PC-9 (cell line): ENCODE measurements at regions of chr16 and their contacts with region 1.

Region 1: GRCh38 chr16:12095275-12096156 is 119.0 kb downstream of the SNX29 start:
- DNase-seq: peak in 1 of 2 experiments; percentile 47
- H3K4me3 ChIP-seq: no peak overlapping the region
- H3K27ac ChIP-seq: no peak overlapping the region
- H3K4me1 ChIP-seq: peaks cover 13% of the 10 kb centered on the region; the same call in 1 of the 2 replicates
- H3K27me3 ChIP-seq: no peaks in the 10 kb centered on the region
- CTCF ChIP-seq: peak; percentile 95

Region 2: DNA sequence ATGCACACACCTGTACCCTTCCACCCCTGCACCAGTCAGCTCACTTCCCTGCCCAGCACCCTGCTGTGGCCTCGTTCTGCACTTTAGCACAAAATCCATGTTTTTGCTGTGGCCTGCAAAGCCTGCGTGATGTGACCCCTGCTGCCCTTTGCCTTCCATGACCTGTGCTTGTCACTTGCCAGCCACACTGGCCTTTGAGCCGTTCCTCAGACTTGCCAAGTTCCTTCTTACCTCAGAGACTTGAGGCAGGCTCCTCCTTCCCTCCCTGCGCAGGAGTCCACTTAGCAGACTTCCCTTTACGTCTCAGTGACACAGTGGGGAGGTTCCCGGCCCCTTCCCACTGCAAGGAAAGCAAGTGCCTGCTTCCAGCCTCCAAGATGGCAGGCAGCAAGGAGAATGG is 15.7 kb after region 1 on chr16:
- CTCF ChIA-PET with region 1: interaction called, 3 read pairs
- POLR2A ChIA-PET with region 1: interaction called, 10 read pairs
- intact Hi-C with region 1: no loop called
- DNase-seq: no peak
- H3K4me3 ChIP-seq: no peak overlapping the region
- H3K27ac ChIP-seq: no peak overlapping the region
- H3K4me1 ChIP-seq: no peaks in the 10 kb centered on the region
- H3K27me3 ChIP-seq: no peaks in the 10 kb centered on the region
- CTCF ChIP-seq: no peak

Region 3: GRCh38 chr16:12228602-12229499 is 133.3 kb after region 1 on chr16:
- CTCF ChIA-PET with region 1: no interaction called
- POLR2A ChIA-PET with region 1: interaction called, 3 read pairs
- intact Hi-C with region 1: loop called (anchors 1 kb)
- DNase-seq: peak in 1 of 2 experiments; percentile 65
- H3K4me3 ChIP-seq: no peak overlapping the region
- H3K27ac ChIP-seq: no peak overlapping the region
- H3K4me1 ChIP-seq: peaks cover 8% of the 10 kb centered on the region; the same call in 1 of the 2 replicates
- H3K27me3 ChIP-seq: no peaks in the 10 kb centered on the region
- CTCF ChIP-seq: peak; percentile 62

Region 4: DNA sequence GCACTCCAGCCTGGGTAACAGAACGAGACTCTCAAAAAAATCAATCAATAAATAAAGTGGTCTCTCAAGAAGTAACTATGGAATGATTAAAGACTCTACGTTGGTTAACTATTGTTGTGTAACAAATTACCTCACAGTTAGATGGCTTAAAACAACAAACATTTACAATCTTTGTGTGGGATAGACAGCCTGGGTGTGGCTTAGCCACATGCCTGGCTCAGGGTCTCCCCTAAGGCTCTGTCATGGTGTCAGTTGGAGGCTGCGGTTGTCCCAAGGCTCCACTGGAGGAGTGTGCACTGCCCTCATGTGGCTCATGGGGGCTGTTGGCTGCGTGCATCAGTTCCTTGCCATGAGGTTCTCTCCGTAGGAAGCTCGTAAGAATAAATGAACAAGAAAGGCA is 175.5 kb after region 1 on chr16:
- CTCF ChIA-PET with region 1: no interaction called
- POLR2A ChIA-PET with region 1: no interaction called
- intact Hi-C with region 1: loop called (anchors 10 kb)
- DNase-seq: peak in 1 of 2 experiments; percentile 4
- H3K4me3 ChIP-seq: no peak overlapping the region
- H3K27ac ChIP-seq: no peak overlapping the region
- H3K4me1 ChIP-seq: no peaks in the 10 kb centered on the region
- H3K27me3 ChIP-seq: no peaks in the 10 kb centered on the region
- CTCF ChIP-seq: no peak

Region 5: GRCh38 chr16:12340151-12340733 is 244.7 kb after region 1 on chr16:
- CTCF ChIA-PET with region 1: interaction called, 5 read pairs
- POLR2A ChIA-PET with region 1: no interaction called
- intact Hi-C with region 1: loop called (anchors 1 kb)
- DNase-seq: peak in 1 of 2 experiments; percentile 14
- H3K4me3 ChIP-seq: no peak overlapping the region
- H3K27ac ChIP-seq: peak overlapping the region; percentile 71; the same call in 1 of the 2 replicates
- H3K4me1 ChIP-seq: peaks cover 30% of the 10 kb centered on the region
- H3K27me3 ChIP-seq: no peaks in the 10 kb centered on the region
- CTCF ChIP-seq: peak; percentile 69

Region 6: GRCh38 chr16:12907670-12908233 is 812.2 kb after region 1 on chr16:
- CTCF ChIA-PET with region 1: no interaction called
- POLR2A ChIA-PET with region 1: no interaction called
- intact Hi-C with region 1: loop called (anchors 10 kb)
- DNase-seq: no peak
- H3K4me3 ChIP-seq: no peak overlapping the region
- H3K27ac ChIP-seq: no peak overlapping the region
- H3K4me1 ChIP-seq: peaks cover 25% of the 10 kb centered on the region
- H3K27me3 ChIP-seq: no peaks in the 10 kb centered on the region
- CTCF ChIP-seq: peak; percentile 47; the same call in 1 of the 2 replicates